HCT116 (cell line): ENCODE measurements at regions of chr12 and their contacts with region 1.

Region 1: DNA sequence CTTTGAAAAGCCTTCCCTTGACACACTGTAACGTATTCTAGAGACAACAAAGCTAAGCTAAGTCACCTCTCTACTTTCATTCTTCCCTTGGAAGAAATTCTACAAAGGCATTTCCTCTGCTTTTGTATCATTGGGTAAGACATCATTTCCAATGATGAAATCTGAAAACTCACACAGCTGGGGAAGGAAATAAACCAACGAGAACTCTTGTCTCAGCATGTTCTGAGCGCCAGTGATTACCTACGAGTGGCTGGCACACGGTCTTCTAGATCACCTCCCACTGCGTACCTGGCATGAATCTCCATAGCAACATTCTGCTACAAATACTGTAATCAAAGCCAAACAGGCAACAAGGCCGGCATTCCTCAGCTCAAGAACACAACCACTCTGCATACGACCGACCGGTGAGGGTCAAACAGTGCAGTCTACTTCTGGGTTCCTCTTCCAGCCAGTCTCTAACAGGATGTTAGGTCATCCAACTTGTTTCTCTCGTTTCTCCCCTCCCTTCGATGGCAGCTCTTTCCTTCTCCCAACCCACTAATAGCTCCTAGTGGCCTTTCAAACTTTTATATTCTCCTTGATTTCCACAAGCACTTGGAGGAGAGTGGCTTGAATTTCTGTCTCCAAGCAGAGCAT is 7.6 kb downstream of the VPS37B start:
- DNase-seq: peak; percentile 81
- ATAC-seq: peak; percentile 65
- H3K4me3 ChIP-seq: peak overlapping the region; percentile 26 to 53
- H3K27ac ChIP-seq: peak overlapping the region; percentile 82
- H3K4me1 ChIP-seq: peaks cover 70 to 95% of the 10 kb centered on the region in 2 experiments
- H3K27me3 ChIP-seq: no peaks in the 10 kb centered on the region
- CTCF ChIP-seq: no peak
- POLR2A ChIP-seq: no peak
- RAD21 ChIP-seq: no peak

Region 2: GRCh38 chr12:122304902-122305301 is 583.4 kb before region 1 on chr12:
- CTCF ChIA-PET with region 1: no interaction called
- POLR2A ChIA-PET with region 1: no interaction called
- RAD21 ChIA-PET with region 1: no interaction called
- intact Hi-C with region 1: no loop called
- DNase-seq: no peak
- ATAC-seq: no peak
- H3K4me3 ChIP-seq: no peak overlapping the region
- H3K27ac ChIP-seq: no peak overlapping the region
- H3K4me1 ChIP-seq: no peaks in the 10 kb centered on the region
- H3K27me3 ChIP-seq: no peaks in the 10 kb centered on the region
- CTCF ChIP-seq: no peak
- POLR2A ChIP-seq: no peak
- RAD21 ChIP-seq: no peak

Region 3: GRCh38 chr12:122471324-122472226 is 416.8 kb before region 1 on chr12:
- CTCF ChIA-PET with region 1: no interaction called
- POLR2A ChIA-PET with region 1: no interaction called
- RAD21 ChIA-PET with region 1: no interaction called
- intact Hi-C with region 1: no loop called
- DNase-seq: peak; percentile 42
- ATAC-seq: peak; percentile 67; the same call in 1 of the 2 replicates
- H3K4me3 ChIP-seq: no peak overlapping the region
- H3K27ac ChIP-seq: no peak overlapping the region
- H3K4me1 ChIP-seq: peaks cover 0 to 10% of the 10 kb centered on the region in 2 experiments; a peak in 2 of 4 replicates
- H3K27me3 ChIP-seq: no peaks in the 10 kb centered on the region
- CTCF ChIP-seq: peak; percentile 67 to 78 (median 77)
- POLR2A ChIP-seq: no peak
- RAD21 ChIP-seq: peak; percentile 81

Region 4: DNA sequence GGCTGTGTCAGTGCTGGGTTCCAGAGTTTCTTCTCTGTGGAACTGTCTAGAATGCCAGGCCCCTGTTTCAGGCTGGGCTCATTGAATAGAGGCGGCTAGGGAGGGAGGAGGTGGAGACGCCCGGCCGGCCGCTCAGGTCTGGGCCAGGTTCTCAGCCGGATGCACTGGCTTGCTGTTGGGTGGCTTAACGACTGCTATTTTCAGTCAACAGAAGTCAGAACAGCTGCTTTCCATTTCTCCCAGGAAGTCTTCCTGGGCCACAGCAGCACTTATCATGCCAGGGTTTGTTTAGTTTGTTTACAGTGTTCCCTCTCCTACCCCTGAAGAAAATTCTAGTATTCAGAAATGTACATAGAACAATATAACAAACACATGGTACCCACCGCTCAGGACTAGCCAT is 33.6 kb after region 1 on chr12:
- CTCF ChIA-PET with region 1: no interaction called
- POLR2A ChIA-PET with region 1: interaction called, 8 read pairs
- RAD21 ChIA-PET with region 1: no interaction called
- intact Hi-C with region 1: loop called (anchors 5 kb)
- DNase-seq: no peak
- ATAC-seq: no peak
- H3K4me3 ChIP-seq: no peak overlapping the region
- H3K27ac ChIP-seq: no peak overlapping the region
- H3K4me1 ChIP-seq: peaks cover 45 to 74% of the 10 kb centered on the region in 2 experiments
- H3K27me3 ChIP-seq: no peaks in the 10 kb centered on the region
- CTCF ChIP-seq: no peak
- POLR2A ChIP-seq: no peak
- RAD21 ChIP-seq: no peak